Mammary epithelial cell (primary cell): ENCODE measurements at regions of chr20 and their contacts with region 1.

Region 1: DNA sequence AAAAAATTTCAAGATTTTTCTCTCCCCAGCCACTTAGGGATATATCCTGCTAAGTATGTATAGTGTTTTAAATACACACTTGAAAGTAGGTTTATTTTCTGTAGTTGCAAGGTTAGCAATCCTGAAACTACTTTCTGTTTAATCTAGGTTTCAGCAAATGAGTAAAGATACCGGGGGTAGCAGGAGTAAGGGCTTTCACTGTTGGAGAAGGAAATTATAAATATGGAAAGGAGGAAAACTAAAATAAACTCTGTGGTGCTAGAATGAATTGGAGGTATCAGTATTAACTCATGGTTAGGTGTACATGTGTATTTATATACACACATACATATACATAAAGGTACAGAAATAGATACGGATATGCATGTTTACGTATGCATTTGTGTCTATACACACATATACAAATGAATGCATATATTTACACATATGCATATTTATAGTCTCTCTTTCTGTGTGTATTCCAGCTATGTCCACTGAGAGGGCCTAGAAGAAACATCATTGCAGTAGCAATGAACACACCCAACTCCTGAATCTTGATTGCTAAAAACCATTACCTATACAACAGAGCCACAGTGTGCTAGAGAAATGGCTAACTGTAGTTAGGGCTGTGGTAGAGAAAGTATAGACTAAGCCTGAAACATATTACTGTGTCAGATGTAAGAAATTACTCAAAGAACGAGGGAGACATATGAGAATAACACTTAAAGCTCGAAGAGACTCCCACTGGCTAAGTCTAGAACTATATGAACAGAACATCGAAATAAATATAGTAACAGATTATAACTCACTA is 95.9 kb upstream of the EMILIN3 start:
- DNase-seq: no peak
- H3K4me3 ChIP-seq: no peak overlapping the region
- H3K27ac ChIP-seq: no peak overlapping the region
- H3K4me1 ChIP-seq: no peaks in the 10 kb centered on the region
- H3K27me3 ChIP-seq: no peaks in the 10 kb centered on the region
- CTCF ChIP-seq: no peak

Region 2: GRCh38 chr20:41572010-41572560 is 109.5 kb after region 1 on chr20:
- CTCF ChIA-PET with region 1: no interaction called
- dilution Hi-C with region 1: no loop called
- in situ Hi-C with region 1: loop called in 1 of 2 experiments (anchors 25 kb)
- intact Hi-C with region 1: no loop called
- DNase-seq: no peak
- H3K4me3 ChIP-seq: no peak overlapping the region
- H3K27ac ChIP-seq: no peak overlapping the region
- H3K4me1 ChIP-seq: peaks cover 3% of the 10 kb centered on the region
- H3K27me3 ChIP-seq: no peaks in the 10 kb centered on the region
- CTCF ChIP-seq: no peak